SK-N-SH (cell line): ENCODE measurements at regions of chr14 and their contacts with region 1.

Region 1: DNA sequence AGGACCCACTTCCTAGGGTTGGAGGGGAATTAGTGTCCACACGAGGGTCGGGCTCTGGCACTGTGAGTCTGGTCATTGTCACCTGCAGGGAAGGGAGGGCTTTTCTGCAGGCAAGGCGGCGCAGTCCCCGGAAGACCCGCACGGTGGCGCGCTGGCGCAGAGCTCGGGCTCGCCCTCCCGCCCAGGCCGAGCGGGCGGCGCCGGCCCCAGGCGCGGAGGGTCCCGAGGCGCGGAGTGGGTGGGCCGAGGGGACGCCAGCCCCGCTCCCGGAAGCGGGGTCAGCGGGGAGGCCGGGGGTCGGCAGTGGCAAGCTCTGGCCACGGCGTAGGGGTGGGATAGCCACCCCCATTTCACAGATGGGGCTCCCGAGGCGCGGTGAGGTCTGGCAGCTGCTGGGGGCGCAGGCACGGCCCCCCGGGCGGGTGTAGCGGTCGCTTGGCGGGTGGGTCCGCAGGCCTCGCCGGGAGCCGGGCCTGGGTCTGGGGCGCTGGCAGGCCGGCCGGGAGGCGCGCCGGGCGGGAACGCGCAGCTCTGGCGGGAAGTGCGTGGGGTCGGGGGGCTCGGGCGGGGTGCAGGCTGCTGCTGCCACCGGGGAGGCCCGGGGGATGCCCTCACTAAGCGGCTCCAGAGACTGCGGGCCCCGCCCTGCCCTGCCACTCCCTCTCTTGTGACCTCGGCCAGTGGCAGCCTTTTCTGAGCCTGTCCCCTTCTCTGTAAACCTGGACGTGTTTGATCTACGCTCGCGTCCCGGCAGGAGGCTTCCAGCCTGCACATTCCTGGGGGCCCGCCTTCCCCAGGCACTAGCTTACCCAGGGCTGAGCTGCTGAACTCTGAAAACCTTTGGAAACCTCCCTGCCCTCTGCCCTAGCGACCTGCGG is 46.1 kb downstream of the CYP46A1 start:
- DNase-seq: peak; percentile 97
- H3K4me3 ChIP-seq: peak overlapping the region; percentile 46 to 63
- H3K27ac ChIP-seq: no peak overlapping the region
- H3K4me1 ChIP-seq: peaks cover 0 to 10% of the 10 kb centered on the region in 2 experiments; a peak in 1 of 4 replicates
- H3K27me3 ChIP-seq: no peaks in the 10 kb centered on the region
- CTCF ChIP-seq: peak; percentile 84
- EP300 ChIP-seq: no peak
- RAD21 ChIP-seq: peak; percentile 79

Region 2: GRCh38 chr14:99706107-99706900 is 23.9 kb before region 1 on chr14:
- CTCF ChIA-PET with region 1: interaction called, 11 read pairs
- POLR2A ChIA-PET with region 1: interaction called, 3 read pairs
- DNase-seq: no peak
- H3K4me3 ChIP-seq: no peak overlapping the region
- H3K27ac ChIP-seq: no peak overlapping the region
- H3K4me1 ChIP-seq: no peaks in the 10 kb centered on the region
- H3K27me3 ChIP-seq: no peaks in the 10 kb centered on the region
- CTCF ChIP-seq: no peak
- EP300 ChIP-seq: no peak
- RAD21 ChIP-seq: no peak

Region 3: DNA sequence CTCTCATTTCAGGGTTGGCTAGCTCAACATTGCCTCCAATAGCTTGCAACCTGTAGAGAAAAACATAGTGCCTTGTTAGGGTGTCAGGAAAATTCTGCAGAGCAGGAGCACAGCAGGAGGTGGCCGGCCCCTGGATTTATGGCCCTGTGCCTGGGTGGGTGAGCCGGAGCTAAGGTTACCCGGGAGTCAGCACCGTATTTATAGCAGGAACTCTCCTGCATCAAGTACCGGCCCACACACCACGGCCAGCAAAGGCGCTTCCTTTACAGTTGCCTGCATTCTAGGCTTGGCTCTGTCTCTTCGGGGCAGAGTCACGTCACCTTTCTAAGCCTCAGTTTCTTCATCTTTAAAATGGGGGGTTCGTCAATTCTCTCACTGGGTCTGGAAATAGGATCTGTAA is 10.2 kb after region 1 on chr14:
- CTCF ChIA-PET with region 1: interaction called, 19 read pairs
- POLR2A ChIA-PET with region 1: no interaction called
- DNase-seq: no peak
- H3K4me3 ChIP-seq: no peak overlapping the region
- H3K27ac ChIP-seq: no peak overlapping the region
- H3K4me1 ChIP-seq: no peaks in the 10 kb centered on the region; a peak in 1 of 4 replicates
- H3K27me3 ChIP-seq: no peaks in the 10 kb centered on the region
- CTCF ChIP-seq: no peak
- EP300 ChIP-seq: no peak
- RAD21 ChIP-seq: no peak

Region 4: DNA sequence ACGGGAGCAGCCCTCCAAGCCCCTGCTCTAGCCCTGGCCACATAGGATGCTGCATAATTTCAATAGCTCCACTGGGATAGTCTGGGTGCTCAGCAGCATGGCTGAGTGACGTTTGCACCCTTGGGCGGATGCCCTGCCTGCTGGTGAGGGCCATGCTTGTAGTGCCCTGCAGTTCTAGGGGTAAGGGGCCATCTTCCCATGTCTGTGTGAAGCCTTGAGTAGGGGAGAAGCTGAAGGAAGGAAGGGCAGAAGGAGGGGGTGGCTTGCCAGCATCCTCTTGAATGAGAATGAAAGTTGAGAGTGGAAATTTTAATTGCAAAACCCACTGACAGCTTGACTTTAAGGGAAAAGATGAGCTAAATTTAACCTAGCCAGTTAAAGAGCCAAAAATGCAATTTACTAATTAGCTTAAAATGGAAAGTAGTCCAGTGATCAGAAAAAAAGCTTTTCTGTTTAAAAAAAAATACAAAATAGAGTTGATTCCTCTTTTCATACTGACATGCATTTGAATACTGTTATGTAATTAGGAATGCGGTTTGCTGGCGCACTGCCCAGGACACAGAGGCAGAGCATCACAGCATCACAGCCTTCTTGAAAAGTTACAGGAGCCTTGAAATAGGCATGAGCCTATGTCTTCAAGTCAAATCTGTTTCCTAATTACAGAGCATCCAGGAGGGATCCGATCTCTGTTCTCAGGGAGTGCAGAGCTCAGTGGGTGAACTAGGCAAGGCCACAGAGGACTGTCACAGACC is 44.5 kb after region 1 on chr14:
- CTCF ChIA-PET with region 1: interaction called, 28 read pairs
- POLR2A ChIA-PET with region 1: no interaction called
- DNase-seq: no peak
- H3K4me3 ChIP-seq: no peak overlapping the region
- H3K27ac ChIP-seq: peak overlapping the region in 1 of 2 experiments; percentile 18; a peak in 2 of 4 replicates
- H3K4me1 ChIP-seq: peaks cover 0 to 29% of the 10 kb centered on the region in 2 experiments; a peak in 2 of 4 replicates
- H3K27me3 ChIP-seq: no peaks in the 10 kb centered on the region
- CTCF ChIP-seq: no peak
- EP300 ChIP-seq: no peak
- RAD21 ChIP-seq: no peak

Region 5: GRCh38 chr14:99802301-99803105 is 72.3 kb after region 1 on chr14:
- CTCF ChIA-PET with region 1: interaction called, 14 read pairs
- POLR2A ChIA-PET with region 1: no interaction called
- DNase-seq: no peak
- H3K4me3 ChIP-seq: no peak overlapping the region
- H3K27ac ChIP-seq: no peak overlapping the region
- H3K4me1 ChIP-seq: peaks cover 0 to 17% of the 10 kb centered on the region in 2 experiments; a peak in 1 of 4 replicates
- H3K27me3 ChIP-seq: no peaks in the 10 kb centered on the region
- CTCF ChIP-seq: no peak
- EP300 ChIP-seq: no peak
- RAD21 ChIP-seq: no peak

Region 6: DNA sequence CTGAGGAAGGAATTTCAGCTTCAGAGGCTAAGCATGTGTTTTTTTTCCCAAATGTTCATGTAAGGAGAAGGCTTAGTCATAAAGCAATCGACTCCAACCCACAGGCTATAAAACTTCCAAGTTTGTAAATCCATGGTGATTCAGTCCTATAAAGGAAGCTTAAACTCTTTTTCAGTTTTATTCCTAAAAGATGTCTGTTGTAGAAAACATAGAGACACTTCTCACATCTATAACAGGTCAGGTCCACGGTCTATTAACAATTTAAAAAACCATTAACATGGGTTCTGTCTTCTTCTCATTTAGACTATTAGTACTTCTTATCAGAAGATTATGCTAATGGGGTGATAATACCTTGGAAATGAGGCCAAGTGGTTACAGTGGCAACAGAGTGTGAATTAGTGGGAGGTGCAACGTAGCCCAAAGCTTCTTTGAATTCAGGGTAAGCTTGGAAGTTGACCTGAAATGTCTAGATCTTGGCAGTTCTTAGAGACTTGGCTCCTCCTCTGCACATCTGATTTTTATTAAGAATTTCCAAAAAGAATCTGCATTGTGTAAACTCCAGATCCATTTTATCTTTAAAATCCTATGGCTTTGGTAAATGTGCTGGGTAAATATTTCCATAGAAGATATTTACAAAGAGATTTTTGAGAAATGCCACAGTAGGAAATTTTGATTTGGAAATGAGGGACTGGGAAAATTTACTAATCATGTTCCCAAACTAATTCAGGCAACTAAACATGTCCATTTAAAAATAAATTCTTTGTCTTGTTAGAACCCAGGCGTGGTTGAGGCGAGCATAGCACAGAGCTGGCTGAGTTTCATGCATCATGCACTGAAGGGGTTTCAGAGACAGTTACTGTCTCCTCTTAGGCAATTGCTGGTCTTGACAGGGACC is 149.4 kb after region 1 on chr14:
- CTCF ChIA-PET with region 1: interaction called, 136 read pairs
- POLR2A ChIA-PET with region 1: no interaction called
- DNase-seq: no peak
- H3K4me3 ChIP-seq: no peak overlapping the region; a peak in 1 of 4 replicates
- H3K27ac ChIP-seq: peak overlapping the region; percentile 55 to 83
- H3K4me1 ChIP-seq: peaks cover 15 to 30% of the 10 kb centered on the region in 2 experiments
- H3K27me3 ChIP-seq: no peaks in the 10 kb centered on the region
- CTCF ChIP-seq: no peak
- EP300 ChIP-seq: 0 out of 4 replicates have a peak, but pooled peaks of 1 of the 2 experiments have one; percentile 9
- RAD21 ChIP-seq: no peak

Region 7: GRCh38 chr14:100067971-100068959 is 338.0 kb after region 1 on chr14:
- CTCF ChIA-PET with region 1: no interaction called
- POLR2A ChIA-PET with region 1: no interaction called
- DNase-seq: no peak
- H3K4me3 ChIP-seq: no peak overlapping the region
- H3K27ac ChIP-seq: no peak overlapping the region
- H3K4me1 ChIP-seq: peaks cover 0 to 10% of the 10 kb centered on the region in 2 experiments; a peak in 1 of 4 replicates
- H3K27me3 ChIP-seq: no peaks in the 10 kb centered on the region
- CTCF ChIP-seq: no peak
- EP300 ChIP-seq: no peak
- RAD21 ChIP-seq: no peak

Region 8: DNA sequence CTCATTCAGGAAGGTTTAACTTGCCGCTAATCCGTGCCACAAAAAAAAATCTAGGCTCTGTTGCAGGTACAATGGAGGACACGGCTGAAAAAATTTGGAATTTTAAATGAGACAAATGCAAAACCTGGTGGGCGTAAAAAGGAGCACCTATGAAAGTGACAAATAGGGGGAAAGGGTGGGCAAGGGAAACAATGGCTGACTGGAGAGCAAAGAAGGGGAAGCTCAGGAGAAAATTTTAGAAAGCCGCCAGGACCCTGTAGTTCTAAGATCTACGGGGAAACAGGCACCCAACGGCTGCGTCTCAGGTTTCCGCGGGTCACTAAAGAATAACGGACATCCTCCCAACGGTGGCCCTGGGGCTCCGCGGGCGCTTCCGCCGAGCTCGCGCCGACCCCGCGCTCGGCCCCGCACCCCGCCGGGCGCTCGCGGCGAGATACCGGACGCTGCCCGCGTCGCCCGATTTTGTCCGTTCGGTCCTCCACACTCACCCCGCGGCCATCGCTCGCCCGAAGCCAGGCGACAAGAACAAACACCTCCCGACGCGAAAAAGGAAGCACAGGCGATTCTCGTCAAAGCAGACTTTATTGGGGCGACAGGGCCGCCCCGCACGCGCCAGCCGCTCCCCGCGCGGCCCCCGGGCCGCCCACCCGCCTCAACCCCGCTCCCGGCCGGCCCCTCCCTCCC is 507.6 kb after region 1 on chr14:
- CTCF ChIA-PET with region 1: no interaction called
- POLR2A ChIA-PET with region 1: no interaction called
- DNase-seq: peak; percentile 69
- H3K4me3 ChIP-seq: peak overlapping the region; percentile 92
- H3K27ac ChIP-seq: peak overlapping the region; percentile 94
- H3K4me1 ChIP-seq: peaks cover 7 to 14% of the 10 kb centered on the region in 2 experiments
- H3K27me3 ChIP-seq: no peaks in the 10 kb centered on the region
- CTCF ChIP-seq: no peak
- EP300 ChIP-seq: no peak
- RAD21 ChIP-seq: no peak